CD8-positive, alpha-beta memory T cell (primary cell): ENCODE measurements at regions of chr1 and their contacts with region 1.

Region 1: DNA sequence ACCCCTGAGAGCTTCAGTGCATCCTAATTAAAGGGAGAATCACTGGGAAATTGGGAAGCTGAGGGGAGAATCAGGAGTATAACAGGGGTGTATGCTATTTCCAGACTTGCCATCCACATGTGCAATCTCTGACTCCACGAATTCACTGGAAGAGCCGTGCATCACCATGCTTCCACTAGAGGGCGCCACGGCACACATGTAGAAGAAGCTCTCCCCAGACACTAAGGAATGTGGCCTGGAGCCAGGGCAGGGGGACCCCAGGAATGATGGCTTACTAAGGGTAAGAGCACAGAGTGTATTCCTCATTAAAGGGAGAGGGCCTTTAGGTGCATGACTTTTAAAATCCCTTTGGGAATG is 81.5 kb downstream of the ABCA4 start:
- DNase-seq: peak; percentile 16 to 59 (median 20)
- H3K4me3 ChIP-seq: no peak overlapping the region
- H3K4me3 Mint-ChIP-seq: no peak overlapping the region
- H3K27ac ChIP-seq: no peak overlapping the region
- H3K27ac Mint-ChIP-seq: no peak overlapping the region
- H3K4me1 ChIP-seq: no peaks in the 10 kb centered on the region
- H3K4me1 Mint-ChIP-seq: peaks cover 0 to 8% (median 4%) of the 10 kb centered on the region in 3 donors
- H3K27me3 ChIP-seq: peaks cover 6% of the 10 kb centered on the region
- H3K27me3 Mint-ChIP-seq: peaks cover 21 to 60% of the 10 kb centered on the region in 2 donors

Region 2: DNA sequence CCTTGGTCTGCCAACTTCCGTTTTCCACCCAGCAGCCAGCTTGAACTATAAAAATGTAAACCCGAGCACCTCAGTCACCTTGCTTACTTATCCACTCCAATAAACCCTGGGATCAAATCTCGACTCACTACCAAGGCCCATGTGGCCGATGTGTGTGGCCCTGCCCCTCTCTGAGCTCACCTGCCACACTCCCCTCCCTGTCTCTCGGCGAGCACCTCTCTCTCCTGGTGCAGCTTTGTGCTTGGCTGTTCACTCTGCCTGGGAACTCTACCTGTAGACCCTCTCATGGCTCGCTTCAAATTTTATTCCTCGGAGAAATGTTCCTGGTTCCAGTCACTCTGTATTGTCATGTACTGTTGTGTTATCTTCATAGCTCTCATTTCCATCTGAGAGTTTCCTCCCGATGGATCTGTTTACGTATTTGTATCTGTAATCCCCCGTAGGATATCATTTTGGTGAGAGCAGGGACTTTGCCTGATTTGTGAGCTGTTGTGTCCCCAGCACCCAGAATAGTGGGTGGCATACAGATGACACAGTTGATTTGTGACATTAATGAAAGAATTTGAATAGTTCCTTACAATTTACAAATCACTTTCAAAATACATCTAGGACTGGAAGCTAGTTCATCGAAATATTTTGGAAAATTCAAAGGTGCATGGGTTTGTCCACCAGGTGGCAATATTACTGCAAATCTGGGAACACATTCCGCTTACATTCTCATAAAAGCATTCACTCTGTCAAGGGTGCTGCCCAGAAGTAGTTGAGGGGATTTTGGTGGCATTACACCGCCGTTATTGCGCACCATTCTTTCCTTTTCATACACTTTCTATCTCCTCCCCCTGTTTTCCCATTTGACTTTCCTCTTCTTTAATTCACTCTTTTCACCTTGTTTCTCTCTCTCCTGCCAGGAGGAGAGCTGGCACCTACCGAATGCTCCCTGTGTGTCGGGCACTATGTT is 13.8 kb before region 1 on chr1:
- CTCF ChIA-PET with region 1: interaction called, 22 read pairs
- POLR2A ChIA-PET with region 1: no interaction called
- DNase-seq: peak in 1 of 5 donors; percentile 7
- H3K4me3 ChIP-seq: no peak overlapping the region
- H3K4me3 Mint-ChIP-seq: no peak overlapping the region
- H3K27ac ChIP-seq: no peak overlapping the region
- H3K27ac Mint-ChIP-seq: no peak overlapping the region
- H3K4me1 ChIP-seq: no peaks in the 10 kb centered on the region
- H3K4me1 Mint-ChIP-seq: peaks cover 3 to 15% (median 10%) of the 10 kb centered on the region in 3 donors
- H3K27me3 ChIP-seq: no peaks in the 10 kb centered on the region
- H3K27me3 Mint-ChIP-seq: peaks cover 5 to 16% of the 10 kb centered on the region in 2 donors

Region 3: GRCh38 chr1:94083681-94084080 is 44.2 kb after region 1 on chr1:
- CTCF ChIA-PET with region 1: no interaction called
- POLR2A ChIA-PET with region 1: no interaction called
- DNase-seq: no peak
- H3K4me3 ChIP-seq: no peak overlapping the region
- H3K4me3 Mint-ChIP-seq: no peak overlapping the region
- H3K27ac ChIP-seq: no peak overlapping the region
- H3K27ac Mint-ChIP-seq: peak overlapping the region in 1 of 8 donors; percentile 35
- H3K4me1 ChIP-seq: no peaks in the 10 kb centered on the region
- H3K4me1 Mint-ChIP-seq: no peaks in the 10 kb centered on the region
- H3K27me3 ChIP-seq: no peaks in the 10 kb centered on the region
- H3K27me3 Mint-ChIP-seq: peaks cover 5 to 23% of the 10 kb centered on the region in 2 donors

Region 4: GRCh38 chr1:94105957-94106529 is 66.6 kb after region 1 on chr1:
- CTCF ChIA-PET with region 1: no interaction called
- POLR2A ChIA-PET with region 1: no interaction called
- DNase-seq: no peak
- H3K4me3 ChIP-seq: no peak overlapping the region
- H3K4me3 Mint-ChIP-seq: no peak overlapping the region
- H3K27ac ChIP-seq: no peak overlapping the region
- H3K27ac Mint-ChIP-seq: peak overlapping the region in 1 of 8 donors; percentile 51
- H3K4me1 ChIP-seq: no peaks in the 10 kb centered on the region
- H3K4me1 Mint-ChIP-seq: peaks cover 0 to 10% (median 0%) of the 10 kb centered on the region in 3 donors
- H3K27me3 ChIP-seq: no peaks in the 10 kb centered on the region
- H3K27me3 Mint-ChIP-seq: peaks cover 13 to 43% of the 10 kb centered on the region in 2 donors